Activated CD4-positive, alpha-beta T cell treated with anti-CD3 and anti-CD28 coated beads, Interleukin-2, amount 10 ng/mL, durations not matched to agents 7 days and 5 days (primary cell): ENCODE measurements at regions of chrX and their contacts with region 1.

Region 1: DNA sequence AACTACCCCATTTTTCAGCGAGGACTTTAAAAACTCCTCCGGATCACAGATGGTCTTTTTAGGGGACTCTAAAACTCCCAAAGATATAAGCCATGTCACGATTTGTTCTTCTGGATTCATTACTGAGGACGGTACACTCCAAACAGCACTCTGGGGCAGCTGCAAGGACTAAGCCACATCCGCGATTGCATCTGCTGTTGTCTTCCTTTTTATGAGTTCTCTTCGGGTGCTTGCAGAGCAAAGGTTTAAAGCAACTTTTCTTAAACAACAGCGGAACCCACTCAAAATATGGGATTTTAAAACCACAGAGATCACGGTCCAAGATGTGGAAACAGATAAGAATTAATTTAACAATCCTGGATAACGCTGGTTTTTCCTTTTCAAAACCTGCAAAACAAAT is at the start of gene ARHGEF6:
- DNase-seq: peak; percentile 52
- H3K4me3 Mint-ChIP-seq: peak within 1 kb of the TSS; percentile 83
- H3K27ac Mint-ChIP-seq: peak within 1 kb of the TSS; percentile 95
- H3K4me1 Mint-ChIP-seq: peaks cover 63% of the 10 kb centered on the region
- H3K27me3 Mint-ChIP-seq: no peaks in the 10 kb centered on the region
- total RNA-seq, gene ARHGEF6: 97.2 to 122 TPM

Region 2: GRCh38 chrX:136759968-136760367 is 20.8 kb before region 1 on chrX:
- CTCF ChIA-PET with region 1: no interaction called
- POLR2A ChIA-PET with region 1: no interaction called
- DNase-seq: no peak
- H3K4me3 Mint-ChIP-seq: no peak overlapping the region
- H3K27ac Mint-ChIP-seq: peak overlapping the region; percentile 46
- H3K4me1 Mint-ChIP-seq: peaks cover 62% of the 10 kb centered on the region
- H3K27me3 Mint-ChIP-seq: no peaks in the 10 kb centered on the region

Region 3: GRCh38 chrX:136879001-136879687 is 98.4 kb after region 1 on chrX:
- CTCF ChIA-PET with region 1: interaction called, 3 read pairs
- POLR2A ChIA-PET with region 1: interaction called, 11 read pairs
- DNase-seq: no peak
- H3K4me3 Mint-ChIP-seq: peak overlapping the region; percentile 99
- H3K27ac Mint-ChIP-seq: peak overlapping the region; percentile 99
- H3K4me1 Mint-ChIP-seq: peaks cover 23% of the 10 kb centered on the region
- H3K27me3 Mint-ChIP-seq: no peaks in the 10 kb centered on the region

Region 4: GRCh38 chrX:137178392-137178791 is 397.6 kb after region 1 on chrX:
- CTCF ChIA-PET with region 1: no interaction called
- POLR2A ChIA-PET with region 1: no interaction called
- DNase-seq: no peak
- H3K4me3 Mint-ChIP-seq: no peak overlapping the region
- H3K27ac Mint-ChIP-seq: no peak overlapping the region
- H3K4me1 Mint-ChIP-seq: no peaks in the 10 kb centered on the region
- H3K27me3 Mint-ChIP-seq: peaks cover 4% of the 10 kb centered on the region